HEK293 (cell line): ENCODE measurements at regions of chr22 and their contacts with region 1.

Region 1: DNA sequence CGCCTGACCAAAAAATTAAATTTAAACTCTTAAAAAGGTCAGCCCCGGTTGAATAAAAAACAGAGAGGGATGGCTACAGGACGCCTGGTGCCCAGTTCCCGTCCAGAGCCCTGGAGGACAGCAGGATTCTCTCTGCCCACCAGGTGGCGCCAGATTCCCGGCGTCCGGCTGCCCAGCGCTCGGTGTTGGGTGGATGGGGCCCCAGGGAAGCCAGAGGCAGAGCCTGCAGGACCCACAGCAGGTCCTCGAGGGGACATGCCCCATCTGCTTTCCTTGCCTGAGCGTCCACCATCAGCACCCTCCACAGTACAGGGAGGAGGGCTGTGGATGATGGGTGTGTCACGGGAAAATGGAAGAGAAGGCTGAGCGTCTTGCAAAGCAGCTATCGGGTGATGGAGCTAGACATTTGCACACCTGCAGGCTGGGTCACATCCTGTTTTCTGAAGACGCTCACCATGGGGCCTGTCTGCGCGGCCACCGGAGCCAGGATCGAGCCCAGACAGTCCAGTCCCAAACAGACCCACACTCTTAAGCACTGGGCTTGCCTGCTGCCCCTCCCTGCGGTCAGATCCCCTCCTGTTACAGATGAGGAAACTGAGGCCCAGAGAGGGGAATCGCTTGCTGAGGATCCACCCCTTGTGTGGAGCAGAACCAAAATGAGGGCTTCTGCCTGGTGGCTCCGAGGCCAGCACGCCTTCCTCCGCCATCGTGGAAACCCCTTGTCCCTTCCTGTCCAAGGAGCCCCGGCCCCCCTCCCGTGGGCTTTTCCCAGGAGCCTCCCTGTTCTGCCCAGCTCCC is 18.5 kb upstream of the CBX7 start:
- H3K4me3 ChIP-seq: no peak overlapping the region
- H3K27ac ChIP-seq: no peak overlapping the region
- H3K4me1 ChIP-seq: peaks cover 10% of the 10 kb centered on the region
- CTCF ChIP-seq: peak; percentile 89

Region 2: DNA sequence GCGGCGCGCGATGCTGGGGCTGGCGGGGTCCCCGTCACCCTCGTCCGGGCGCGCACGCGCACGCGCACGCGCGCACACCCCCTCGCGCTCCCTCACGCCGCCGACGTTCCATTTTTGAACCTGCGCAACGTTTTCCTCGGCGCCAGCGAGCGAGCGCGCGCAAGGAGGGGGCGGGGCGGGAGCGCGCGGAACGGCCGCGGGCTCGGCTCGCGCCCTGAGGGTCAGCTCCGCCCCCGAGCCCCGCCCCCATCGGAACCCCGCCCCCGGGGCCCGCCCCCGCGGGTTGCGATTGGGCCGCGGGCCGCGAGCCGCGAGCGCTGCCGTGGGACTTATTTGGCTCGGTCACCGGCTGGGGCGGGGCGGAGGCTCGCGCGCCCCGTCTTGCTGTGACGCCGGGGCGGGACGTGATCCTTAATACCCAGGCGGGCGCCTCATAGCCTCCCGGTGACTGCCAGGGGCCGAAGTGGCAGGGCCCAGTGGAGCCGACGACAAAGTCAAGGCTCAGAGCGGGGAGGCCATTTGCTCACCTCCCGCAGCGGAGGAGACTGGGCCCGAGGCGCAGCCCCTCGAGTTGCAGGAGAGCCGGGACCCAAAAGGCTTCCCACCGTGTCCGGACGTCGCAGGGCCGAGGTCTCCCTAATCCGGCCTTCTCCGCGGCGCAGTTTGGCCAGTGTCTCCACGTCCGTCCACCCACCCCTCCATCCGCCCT is 18.4 kb before region 1 on chr22 and contains the start of gene CBX7:
- CTCF ChIA-PET with region 1: interaction called, 28 read pairs
- POLR2A ChIA-PET with region 1: no interaction called
- H3K4me3 ChIP-seq: peak within 1 kb of the TSS; percentile 54
- H3K27ac ChIP-seq: peak within 1 kb of the TSS; percentile 64; the same call in 1 of the 2 replicates
- H3K4me1 ChIP-seq: peaks cover 2% of the 10 kb centered on the region; the same call in 1 of the 2 replicates
- CTCF ChIP-seq: no peak

Region 3: DNA sequence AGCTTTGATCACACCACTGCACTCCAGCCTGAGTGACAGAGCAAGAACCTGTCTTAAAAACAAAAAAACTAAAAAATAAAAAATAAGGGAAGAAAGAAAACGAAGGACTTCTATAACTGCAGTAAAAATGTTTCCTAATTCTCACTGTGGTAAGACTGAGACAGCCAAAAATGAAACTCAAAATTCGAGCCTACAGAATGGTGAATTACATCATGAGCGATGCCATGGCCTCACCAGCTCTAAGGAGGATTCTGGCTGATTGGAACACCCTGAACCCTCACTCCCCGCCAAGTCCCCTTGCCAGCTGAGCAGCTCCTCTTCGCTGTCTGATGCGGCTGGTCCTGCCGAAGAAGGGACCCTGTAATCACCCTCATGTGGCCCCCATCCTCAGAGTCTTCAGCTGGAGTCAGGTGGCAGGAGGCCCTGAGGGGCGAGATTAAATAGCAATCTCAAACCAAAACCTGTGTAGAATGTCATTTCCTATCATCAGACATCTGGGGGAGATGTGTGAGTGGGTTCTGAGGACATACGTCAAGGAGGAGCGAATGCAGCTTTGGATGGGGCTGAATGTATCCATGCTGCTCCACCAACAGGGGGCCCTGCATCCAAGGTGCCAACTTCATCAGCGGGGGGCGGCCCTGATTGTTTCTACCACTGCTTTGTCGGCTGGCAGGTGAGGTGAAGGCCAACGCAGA is 44.5 kb after region 1 on chr22:
- CTCF ChIA-PET with region 1: interaction called, 11 read pairs
- POLR2A ChIA-PET with region 1: interaction called, 3 read pairs
- H3K4me3 ChIP-seq: no peak overlapping the region
- H3K27ac ChIP-seq: no peak overlapping the region
- H3K4me1 ChIP-seq: no peaks in the 10 kb centered on the region
- CTCF ChIP-seq: peak; percentile 33; the same call in 1 of the 2 replicates

Region 4: DNA sequence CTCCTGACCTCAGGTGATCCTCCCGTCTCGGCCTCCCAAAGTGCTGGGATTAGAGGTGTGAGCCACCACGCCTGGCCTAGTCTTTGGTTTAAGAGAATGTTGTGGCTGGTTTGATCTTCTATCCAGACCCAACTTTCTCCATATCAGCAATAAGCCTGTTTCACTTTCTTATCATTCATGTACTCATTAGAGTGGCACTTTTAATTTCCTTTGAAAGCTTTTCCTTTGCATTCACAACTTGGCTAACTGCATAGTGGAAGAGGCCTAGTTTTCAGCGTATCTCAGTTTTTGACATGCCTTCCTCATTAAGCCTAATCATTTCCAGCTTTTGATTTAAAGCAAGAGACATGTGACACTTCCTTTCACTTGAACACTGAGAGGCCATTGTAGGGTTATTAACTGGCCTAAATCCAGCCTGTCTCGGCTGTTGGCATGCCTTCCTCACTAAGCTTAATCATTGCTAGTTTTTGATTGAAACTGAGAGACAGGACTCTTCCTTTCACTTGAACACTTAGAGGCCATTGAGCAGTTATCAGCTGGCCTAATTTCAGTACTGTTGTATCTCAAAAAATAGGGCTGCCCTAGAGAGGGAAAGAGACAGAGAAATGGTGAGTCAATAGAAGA is 161.5 kb after region 1 on chr22:
- CTCF ChIA-PET with region 1: interaction called, 36 read pairs
- POLR2A ChIA-PET with region 1: no interaction called
- H3K4me3 ChIP-seq: no peak overlapping the region
- H3K27ac ChIP-seq: no peak overlapping the region
- H3K4me1 ChIP-seq: 0 out of 2 replicates have a peak, but pooled peaks cover 2% of the 10 kb centered on the region
- CTCF ChIP-seq: no peak